ENCODE measurements at regions of chr15 and their contacts with region 1.

Region 1: GRCh38 chr15:77496710-77497103 is 76.0 kb downstream of the HMG20A start:
- DNase-seq: peak; percentile 73 to 95
- H3K4me3 ChIP-seq: peak overlapping the region in 1 of 4 experiments; percentile 15; a peak in 1 of 8 replicates
- H3K27ac ChIP-seq: 0 out of 2 replicates have a peak overlapping the region, but pooled peaks have one; percentile 28
- H3K4me1 ChIP-seq: peaks cover 13 to 38% (median 19%) of the 10 kb centered on the region in 4 experiments
- H3K27me3 ChIP-seq: no peaks in the 10 kb centered on the region
- CTCF ChIP-seq: peak; percentile 89 to 96 (median 90)
- EP300 ChIP-seq: no peak
- POLR2A ChIP-seq: no peak
- RAD21 ChIP-seq: peak; percentile 94

Region 2: DNA sequence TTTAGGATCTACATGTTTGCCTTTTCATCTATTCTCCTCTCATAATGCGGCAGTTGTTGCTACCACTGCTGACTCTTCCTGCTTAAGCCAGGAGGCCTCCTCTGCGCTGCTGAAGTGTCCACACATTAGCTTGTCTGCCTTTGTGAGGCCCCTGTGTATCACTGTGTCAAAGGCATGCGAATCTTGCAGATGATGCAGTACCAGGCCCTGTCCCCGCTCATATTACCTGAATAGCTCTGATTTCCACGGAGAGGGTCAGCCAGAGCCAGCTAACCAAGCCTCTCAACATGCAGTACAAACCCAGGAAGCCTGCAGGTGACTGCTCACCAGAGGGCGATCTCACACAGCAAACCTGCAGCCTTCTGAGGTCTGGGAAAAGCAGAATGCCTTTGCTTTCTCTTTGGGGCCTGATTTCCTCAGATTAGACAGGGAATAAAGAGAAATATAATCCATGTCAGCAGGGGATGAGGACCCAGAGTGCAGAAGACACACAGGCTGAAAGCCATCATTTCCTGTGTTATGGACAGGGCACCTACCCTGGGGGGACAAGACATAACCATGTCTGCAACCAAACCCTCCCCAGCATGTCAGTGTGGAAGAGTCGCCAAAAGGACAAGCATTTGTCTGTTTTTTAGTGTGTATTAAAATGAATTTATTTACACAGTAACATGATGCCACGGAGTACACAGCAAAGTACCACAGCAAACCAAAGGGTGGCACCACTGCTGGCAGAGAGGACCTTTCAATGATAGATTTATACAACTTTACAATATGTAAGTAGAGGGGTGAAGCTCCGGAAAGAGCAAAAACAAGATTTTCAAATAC is 389.0 kb before region 1 on chr15:
- CTCF ChIA-PET with region 1: interaction called, 11 read pairs
- POLR2A ChIA-PET with region 1: no interaction called
- DNase-seq: peak; percentile 38 to 72
- H3K4me3 ChIP-seq: no peak overlapping the region
- H3K27ac ChIP-seq: no peak overlapping the region
- H3K4me1 ChIP-seq: no peaks in the 10 kb centered on the region
- H3K27me3 ChIP-seq: no peaks in the 10 kb centered on the region
- CTCF ChIP-seq: peak; percentile 88 to 93 (median 91)
- EP300 ChIP-seq: no peak
- POLR2A ChIP-seq: no peak
- RAD21 ChIP-seq: peak; percentile 93 to 96

Region 3: DNA sequence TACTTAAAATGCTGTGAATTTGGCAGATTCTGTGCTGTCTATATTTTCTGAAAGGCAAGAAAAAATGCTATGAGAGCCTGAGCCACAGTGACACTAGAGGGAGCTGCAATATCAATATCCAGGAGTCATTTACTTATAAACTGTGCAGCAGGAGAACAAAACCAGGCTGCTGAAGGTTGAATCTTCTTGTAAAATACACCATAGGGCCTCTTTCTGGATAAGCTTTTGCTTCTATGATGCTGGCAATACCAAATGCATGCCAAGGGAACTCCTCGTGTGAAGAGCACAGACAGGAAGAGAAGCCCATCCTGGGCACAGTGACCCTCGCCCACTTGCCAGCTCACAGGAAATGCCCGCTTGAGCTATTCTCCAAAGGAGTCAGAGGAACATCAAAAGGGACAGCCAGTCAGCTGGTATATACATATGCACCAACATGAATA is 377.8 kb before region 1 on chr15:
- CTCF ChIA-PET with region 1: interaction called, 26 read pairs
- POLR2A ChIA-PET with region 1: no interaction called
- DNase-seq: no peak
- H3K4me3 ChIP-seq: no peak overlapping the region
- H3K27ac ChIP-seq: no peak overlapping the region
- H3K4me1 ChIP-seq: peaks cover 0 to 4% (median 0%) of the 10 kb centered on the region in 4 experiments; a peak in 4 of 7 replicates
- H3K27me3 ChIP-seq: no peaks in the 10 kb centered on the region
- CTCF ChIP-seq: peak in 2 of 3 experiments; percentile 60 to 66; a peak in 2 of 4 replicates
- EP300 ChIP-seq: no peak
- POLR2A ChIP-seq: no peak
- RAD21 ChIP-seq: peak; percentile 81 to 85

Region 4: GRCh38 chr15:77186594-77187011 is 310.1 kb before region 1 on chr15:
- CTCF ChIA-PET with region 1: interaction called, 44 read pairs
- POLR2A ChIA-PET with region 1: no interaction called
- DNase-seq: no peak
- H3K4me3 ChIP-seq: no peak overlapping the region
- H3K27ac ChIP-seq: no peak overlapping the region
- H3K4me1 ChIP-seq: no peaks in the 10 kb centered on the region
- H3K27me3 ChIP-seq: no peaks in the 10 kb centered on the region
- CTCF ChIP-seq: peak in 2 of 3 experiments; percentile 42 to 65; a peak in 3 of 4 replicates
- EP300 ChIP-seq: no peak
- POLR2A ChIP-seq: no peak
- RAD21 ChIP-seq: peak; percentile 85 to 87

Region 5: GRCh38 chr15:77195586-77195985 is 301.1 kb before region 1 on chr15:
- CTCF ChIA-PET with region 1: interaction called, 16 read pairs
- POLR2A ChIA-PET with region 1: no interaction called
- DNase-seq: no peak
- H3K4me3 ChIP-seq: no peak overlapping the region
- H3K27ac ChIP-seq: no peak overlapping the region
- H3K4me1 ChIP-seq: no peaks in the 10 kb centered on the region
- H3K27me3 ChIP-seq: no peaks in the 10 kb centered on the region
- CTCF ChIP-seq: no peak
- EP300 ChIP-seq: no peak
- POLR2A ChIP-seq: no peak
- RAD21 ChIP-seq: no peak

Region 6: GRCh38 chr15:77475898-77476297 is 20.8 kb before region 1 on chr15:
- CTCF ChIA-PET with region 1: interaction called, 12 read pairs
- POLR2A ChIA-PET with region 1: no interaction called
- DNase-seq: no peak
- H3K4me3 ChIP-seq: no peak overlapping the region
- H3K27ac ChIP-seq: no peak overlapping the region
- H3K4me1 ChIP-seq: peaks cover 0 to 2% (median 0%) of the 10 kb centered on the region in 4 experiments; a peak in 3 of 7 replicates
- H3K27me3 ChIP-seq: no peaks in the 10 kb centered on the region
- CTCF ChIP-seq: no peak
- EP300 ChIP-seq: no peak
- POLR2A ChIP-seq: no peak
- RAD21 ChIP-seq: no peak

Region 7: DNA sequence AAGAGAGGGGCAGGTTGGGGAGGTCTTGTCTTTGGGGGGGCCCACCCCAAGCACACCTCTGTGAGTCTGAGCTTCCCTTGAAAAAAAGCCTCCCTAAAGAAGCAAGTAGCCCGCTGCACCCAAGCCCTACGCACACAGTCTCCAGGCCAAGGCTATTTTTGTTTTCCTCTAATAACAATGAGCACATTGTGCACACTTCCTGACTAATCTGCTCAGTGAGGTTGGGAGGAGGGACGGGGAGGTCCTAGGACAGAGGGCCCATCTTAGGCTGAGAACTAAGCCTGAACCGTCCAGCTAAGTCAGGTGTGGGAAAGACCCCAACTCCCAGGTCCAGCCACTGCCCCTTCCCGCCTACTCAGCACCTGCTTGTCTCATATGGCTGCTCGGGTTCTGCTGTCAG is 11.2 kb after region 1 on chr15:
- CTCF ChIA-PET with region 1: interaction called, 72 read pairs
- POLR2A ChIA-PET with region 1: interaction called, 39 read pairs
- DNase-seq: no peak
- H3K4me3 ChIP-seq: no peak overlapping the region
- H3K27ac ChIP-seq: no peak overlapping the region
- H3K4me1 ChIP-seq: peaks cover 16 to 32% (median 27%) of the 10 kb centered on the region in 4 experiments
- H3K27me3 ChIP-seq: no peaks in the 10 kb centered on the region
- CTCF ChIP-seq: no peak
- EP300 ChIP-seq: no peak
- POLR2A ChIP-seq: no peak
- RAD21 ChIP-seq: no peak

Measured in H1 (cell line).